ENCODE measurements at regions of chr5 and their contacts with region 1.

Region 1: DNA sequence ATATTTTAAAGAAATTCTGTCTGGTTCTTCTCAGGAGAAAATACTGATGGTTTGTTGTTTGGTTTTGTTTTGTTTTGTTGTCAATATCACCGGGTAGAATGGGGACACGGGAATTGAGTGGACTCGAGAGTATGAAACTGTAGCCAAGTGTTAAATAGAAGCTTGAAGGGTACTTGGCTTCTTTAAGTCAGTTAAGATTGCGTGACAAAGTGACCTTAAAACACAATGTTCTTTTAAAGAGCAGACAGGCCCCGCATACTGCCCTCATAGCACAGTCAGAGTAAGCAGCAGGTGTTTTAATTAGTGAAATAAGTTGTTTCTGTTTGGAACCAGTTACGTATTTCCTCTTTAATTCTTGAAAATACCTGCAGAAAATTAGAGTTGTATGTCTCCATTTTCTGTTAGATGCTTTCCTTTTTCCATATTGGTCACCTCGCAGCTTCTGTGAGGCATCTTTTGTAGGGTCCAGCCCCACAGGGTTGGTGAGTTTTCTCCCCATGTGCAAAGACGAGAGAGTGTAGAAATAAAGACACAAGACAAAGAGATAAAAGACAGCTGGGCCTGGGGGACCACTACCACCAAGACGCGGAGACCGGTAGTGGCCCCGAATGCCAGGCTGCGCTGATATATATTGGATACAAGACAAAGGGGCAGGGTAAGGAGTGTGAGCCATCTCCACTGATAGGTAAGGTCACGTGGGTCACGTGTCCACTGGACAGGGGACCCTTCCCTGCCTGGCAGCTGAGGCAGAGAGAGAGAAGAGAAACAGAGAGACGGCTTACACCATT is 9.6 kb downstream of the TRIP13 start:
- DNase-seq: no peak
- ATAC-seq: peak; percentile 84
- H3K4me3 ChIP-seq: no peak overlapping the region
- H3K27ac ChIP-seq: no peak overlapping the region
- H3K4me1 ChIP-seq: peaks cover 0 to 5% of the 10 kb centered on the region in 2 donors
- H3K27me3 ChIP-seq: no peaks in the 10 kb centered on the region
- CTCF ChIP-seq: no peak

Region 2: GRCh38 chr5:671459-672328 is 230.6 kb before region 1 on chr5:
- intact Hi-C with region 1: loop called in 1 of 2 experiments (anchors 5 kb)
- DNase-seq: peak; percentile 69 to 86 (median 75)
- ATAC-seq: peak; percentile 86
- H3K4me3 ChIP-seq: no peak overlapping the region
- H3K27ac ChIP-seq: no peak overlapping the region
- H3K4me1 ChIP-seq: peaks cover 22 to 30% of the 10 kb centered on the region in 2 donors
- H3K27me3 ChIP-seq: peaks cover 0 to 5% of the 10 kb centered on the region in 2 donors
- CTCF ChIP-seq: peak; percentile 87 to 92